B cell (primary cell): ENCODE measurements at regions of chr1 and their contacts with region 1.

Region 1: DNA sequence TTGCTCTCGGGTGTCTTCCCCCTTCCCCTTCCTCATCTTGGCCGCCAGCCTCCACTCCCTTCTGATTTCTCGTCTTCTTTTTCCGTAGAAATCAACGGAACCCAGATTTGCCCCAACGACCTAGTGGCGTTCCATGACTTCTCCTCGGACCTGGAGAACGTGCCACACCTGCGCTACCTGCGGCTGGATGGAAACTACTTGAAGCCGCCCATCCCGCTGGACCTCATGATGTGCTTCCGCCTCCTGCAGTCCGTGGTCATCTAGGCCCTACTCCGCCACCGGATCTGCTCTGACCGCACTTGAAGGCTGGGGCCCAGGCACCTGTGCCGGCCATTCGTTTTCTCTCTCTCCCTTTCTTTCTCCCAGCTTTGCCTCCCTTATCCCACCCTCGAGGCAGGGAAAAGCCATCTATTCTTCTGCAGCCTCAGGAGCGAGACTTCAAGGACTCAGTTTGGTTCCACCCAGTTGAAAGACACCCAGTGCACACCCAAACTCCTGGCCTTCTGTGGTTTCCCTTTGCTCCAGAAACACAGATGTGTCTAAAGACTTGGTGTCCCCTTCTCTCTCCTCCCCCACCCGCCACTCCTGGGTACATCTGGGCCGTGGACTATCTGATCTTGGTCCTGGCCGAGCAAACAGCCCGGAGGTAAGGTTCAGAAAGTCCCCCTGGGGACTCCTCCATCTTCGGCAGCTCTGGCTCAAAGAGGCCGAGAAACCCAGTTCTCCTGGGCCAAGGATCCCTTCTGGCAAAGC is 7.2 kb upstream of the OPTC start:
- DNase-seq: no peak
- ATAC-seq: no peak
- H3K4me3 ChIP-seq: no peak overlapping the region
- H3K4me3 Mint-ChIP-seq: peak overlapping the region; percentile 90
- H3K27ac ChIP-seq: no peak overlapping the region
- H3K27ac Mint-ChIP-seq: peak overlapping the region; percentile 53
- H3K4me1 ChIP-seq: peaks cover 0 to 10% of the 10 kb centered on the region in 2 donors
- H3K4me1 Mint-ChIP-seq: peaks cover 9% of the 10 kb centered on the region
- H3K27me3 ChIP-seq: peaks cover 0 to 2% (median 0%) of the 10 kb centered on the region in 4 experiments
- H3K27me3 Mint-ChIP-seq: peaks cover 8% of the 10 kb centered on the region
- CTCF ChIP-seq: no peak

Region 2: GRCh38 chr1:203038891-203039608 is 447.7 kb before region 1 on chr1:
- CTCF ChIA-PET with region 1: interaction called, 12 read pairs
- POLR2A ChIA-PET with region 1: no interaction called
- intact Hi-C with region 1: no loop called
- DNase-seq: peak; percentile 73
- ATAC-seq: peak; percentile 78
- H3K4me3 ChIP-seq: no peak overlapping the region
- H3K4me3 Mint-ChIP-seq: no peak overlapping the region
- H3K27ac ChIP-seq: no peak overlapping the region
- H3K27ac Mint-ChIP-seq: no peak overlapping the region
- H3K4me1 ChIP-seq: peaks cover 0 to 2% of the 10 kb centered on the region in 2 donors
- H3K4me1 Mint-ChIP-seq: peaks cover 1% of the 10 kb centered on the region
- H3K27me3 ChIP-seq: peaks cover 0 to 10% (median 2%) of the 10 kb centered on the region in 4 experiments
- H3K27me3 Mint-ChIP-seq: peaks cover 12% of the 10 kb centered on the region
- CTCF ChIP-seq: peak; percentile 93

Region 3: DNA sequence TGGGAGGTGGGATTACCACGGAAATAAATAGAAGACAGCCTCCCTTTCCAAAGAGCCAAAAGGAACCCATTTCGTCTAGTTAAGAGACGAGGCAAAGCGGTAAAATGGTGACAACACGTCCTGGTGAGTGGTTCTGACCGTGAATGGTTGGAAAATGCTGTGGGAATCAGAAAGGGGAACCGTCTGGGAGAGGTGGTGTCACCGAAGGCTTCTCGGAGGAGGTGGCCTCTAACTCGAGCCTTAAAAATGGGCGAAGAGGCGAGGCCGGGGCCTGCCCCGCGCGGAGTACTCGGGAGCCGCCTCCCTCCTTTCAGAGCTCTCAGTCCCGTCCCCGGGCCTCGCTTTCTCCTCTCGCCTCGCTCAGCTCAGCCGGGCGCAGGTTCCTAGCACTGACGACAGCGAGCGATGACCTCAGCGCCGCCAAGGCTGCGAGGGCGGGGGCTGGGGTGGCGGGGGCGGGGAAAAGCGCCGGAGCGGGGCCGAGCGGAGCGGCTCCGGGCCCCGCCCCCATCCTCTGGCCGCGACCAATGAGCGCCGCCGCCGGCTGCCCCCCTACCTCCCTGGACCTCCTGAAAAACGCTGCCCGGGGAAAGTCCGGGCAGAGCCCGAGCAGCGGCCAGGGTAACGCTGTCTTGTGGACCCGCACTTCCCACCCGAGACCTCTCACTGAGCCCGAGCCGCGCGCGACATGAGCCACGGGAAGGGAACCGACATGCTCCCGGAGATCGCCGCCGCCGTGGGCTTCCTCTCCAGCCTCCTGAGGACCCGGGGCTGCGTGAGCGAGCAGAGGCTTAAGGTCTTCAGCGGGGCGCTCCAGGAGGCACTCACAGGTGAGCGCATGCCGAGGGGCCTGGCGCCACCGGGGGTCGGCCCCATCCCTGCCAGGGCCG is 181.6 kb before region 1 on chr1 and contains the start of gene BTG2:
- CTCF ChIA-PET with region 1: interaction called, 29 read pairs
- POLR2A ChIA-PET with region 1: no interaction called
- intact Hi-C with region 1: no loop called
- DNase-seq: peak; percentile 96
- ATAC-seq: peak; percentile 80
- H3K4me3 ChIP-seq: peak within 1 kb of the TSS; percentile 96 to 99 (median 99)
- H3K4me3 Mint-ChIP-seq: peak within 1 kb of the TSS; percentile 99
- H3K27ac ChIP-seq: peak within 1 kb of the TSS; percentile 100
- H3K27ac Mint-ChIP-seq: peak within 1 kb of the TSS; percentile 99
- H3K4me1 ChIP-seq: peaks cover 65 to 78% of the 10 kb centered on the region in 2 donors
- H3K4me1 Mint-ChIP-seq: peaks cover 70% of the 10 kb centered on the region
- H3K27me3 ChIP-seq: no peaks in the 10 kb centered on the region
- H3K27me3 Mint-ChIP-seq: no peaks in the 10 kb centered on the region
- CTCF ChIP-seq: no peak
- total RNA-seq, gene BTG2: 505 and 508 TPM in 2 replicates

Region 4: DNA sequence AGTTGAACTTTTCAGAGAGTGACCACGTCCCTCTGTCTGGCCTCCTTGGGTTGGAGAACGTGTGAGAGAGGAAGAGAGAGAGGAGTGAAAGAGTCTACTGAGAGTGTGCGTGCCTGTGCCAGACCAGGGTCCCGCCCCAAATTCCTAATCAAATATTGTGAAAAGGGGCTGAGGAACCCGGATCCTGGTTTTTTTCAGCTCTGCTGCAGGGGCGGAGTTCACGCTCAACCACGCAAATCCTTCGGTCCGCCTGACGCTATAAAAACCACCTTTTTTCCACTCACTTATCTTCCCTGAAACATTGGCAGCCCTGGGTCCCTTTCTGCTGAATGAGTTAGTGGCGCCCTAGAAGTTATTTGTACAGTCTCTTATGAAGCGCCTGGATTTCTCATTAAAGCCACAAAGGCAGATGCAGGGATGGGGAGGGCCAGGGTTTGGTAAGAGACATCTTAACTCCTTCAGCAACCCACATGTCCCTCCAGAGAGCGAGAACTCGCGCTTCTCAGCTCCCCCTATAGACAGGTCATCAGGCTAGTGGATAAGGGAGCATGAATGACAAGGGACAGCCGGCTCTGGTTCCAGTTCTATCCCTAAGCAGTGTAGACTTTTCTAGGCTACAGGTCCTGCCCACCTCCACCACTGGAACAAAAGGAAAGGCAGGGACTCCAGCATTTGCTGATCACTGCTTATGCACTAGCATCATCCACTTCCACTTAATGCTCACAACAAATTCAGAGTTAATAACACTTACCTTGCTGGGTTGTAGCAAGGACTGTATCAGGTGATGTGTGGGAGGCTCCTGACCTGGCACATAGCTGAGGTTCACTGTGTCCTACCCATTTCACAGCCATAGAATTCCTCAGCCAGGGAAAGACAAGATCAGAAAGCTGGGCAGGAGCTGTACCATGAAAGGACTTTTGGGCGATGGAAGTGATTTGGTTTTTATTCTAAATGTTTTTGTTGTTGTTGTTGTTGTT is 135.5 kb before region 1 on chr1 and contains the start of gene FMOD:
- CTCF ChIA-PET with region 1: interaction called, 511 read pairs
- POLR2A ChIA-PET with region 1: no interaction called
- intact Hi-C with region 1: no loop called
- DNase-seq: peak; percentile 32
- ATAC-seq: no peak
- H3K4me3 ChIP-seq: no peak within 1 kb of the TSS
- H3K4me3 Mint-ChIP-seq: no peak within 1 kb of the TSS
- H3K27ac ChIP-seq: no peak within 1 kb of the TSS
- H3K27ac Mint-ChIP-seq: no peak within 1 kb of the TSS
- H3K4me1 ChIP-seq: peaks cover 6 to 10% of the 10 kb centered on the region in 2 donors
- H3K4me1 Mint-ChIP-seq: peaks cover 3% of the 10 kb centered on the region
- H3K27me3 ChIP-seq: peaks cover 0 to 32% (median 5%) of the 10 kb centered on the region in 4 experiments
- H3K27me3 Mint-ChIP-seq: peaks cover 38% of the 10 kb centered on the region
- CTCF ChIP-seq: no peak
- total RNA-seq, gene FMOD: not detected in 2 replicates

Region 5: DNA sequence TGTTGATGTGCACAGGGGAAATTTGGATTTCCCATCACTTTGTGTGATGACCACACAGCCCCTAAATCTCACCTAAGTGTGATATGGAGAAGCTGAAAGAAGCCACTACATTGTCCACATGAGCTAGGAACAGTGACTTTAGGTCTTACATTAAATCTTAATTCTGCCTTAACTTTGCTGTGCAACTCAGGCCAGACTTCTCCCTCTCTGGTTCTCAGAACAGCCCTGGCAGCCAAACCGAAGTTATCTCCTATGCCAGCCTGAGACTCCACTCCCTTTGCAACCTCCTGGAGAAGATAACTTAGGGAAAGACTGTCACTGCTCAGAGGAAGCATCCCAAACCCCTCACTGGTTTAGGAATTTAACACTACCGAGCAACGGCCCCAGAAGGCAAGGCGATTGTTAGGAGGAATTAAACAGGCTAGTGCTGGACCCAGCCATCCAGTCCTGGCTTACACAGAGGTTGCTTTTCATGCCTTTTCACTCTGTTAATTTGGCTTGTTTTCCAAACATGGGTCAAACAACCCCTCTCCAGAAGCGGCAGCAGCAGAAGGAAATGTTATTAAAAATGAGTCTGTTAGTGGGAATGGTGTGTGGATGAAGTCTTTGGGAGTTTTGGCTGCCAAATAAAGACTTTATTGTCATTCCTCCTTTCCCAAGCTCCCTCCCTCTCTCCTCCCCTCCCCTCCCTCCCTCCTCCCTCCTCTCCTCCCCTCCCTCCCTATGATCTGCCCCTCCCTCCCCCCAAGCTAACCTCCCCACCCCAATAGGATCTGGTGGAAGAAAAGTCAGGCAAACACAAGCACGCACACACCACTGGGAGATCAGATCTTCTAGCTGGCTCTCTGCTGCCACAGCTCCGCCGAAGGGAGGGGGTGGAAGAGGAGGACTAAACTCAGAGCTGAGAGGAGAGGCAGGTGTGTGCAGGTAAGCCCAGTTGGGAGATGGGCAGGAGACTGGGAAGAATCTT is 11.5 kb before region 1 on chr1 and contains the start of gene PRELP:
- CTCF ChIA-PET with region 1: interaction called, 53 read pairs
- POLR2A ChIA-PET with region 1: no interaction called
- intact Hi-C with region 1: no loop called
- DNase-seq: no peak
- ATAC-seq: no peak
- H3K4me3 ChIP-seq: no peak within 1 kb of the TSS
- H3K4me3 Mint-ChIP-seq: no peak within 1 kb of the TSS
- H3K27ac ChIP-seq: no peak within 1 kb of the TSS
- H3K27ac Mint-ChIP-seq: no peak within 1 kb of the TSS
- H3K4me1 ChIP-seq: peaks cover 0 to under 1% of the 10 kb centered on the region in 2 donors
- H3K4me1 Mint-ChIP-seq: peaks cover 9% of the 10 kb centered on the region
- H3K27me3 ChIP-seq: no peaks in the 10 kb centered on the region
- H3K27me3 Mint-ChIP-seq: peaks cover 33% of the 10 kb centered on the region
- CTCF ChIP-seq: no peak
- total RNA-seq, gene PRELP: not detected in 2 replicates

Region 6: DNA sequence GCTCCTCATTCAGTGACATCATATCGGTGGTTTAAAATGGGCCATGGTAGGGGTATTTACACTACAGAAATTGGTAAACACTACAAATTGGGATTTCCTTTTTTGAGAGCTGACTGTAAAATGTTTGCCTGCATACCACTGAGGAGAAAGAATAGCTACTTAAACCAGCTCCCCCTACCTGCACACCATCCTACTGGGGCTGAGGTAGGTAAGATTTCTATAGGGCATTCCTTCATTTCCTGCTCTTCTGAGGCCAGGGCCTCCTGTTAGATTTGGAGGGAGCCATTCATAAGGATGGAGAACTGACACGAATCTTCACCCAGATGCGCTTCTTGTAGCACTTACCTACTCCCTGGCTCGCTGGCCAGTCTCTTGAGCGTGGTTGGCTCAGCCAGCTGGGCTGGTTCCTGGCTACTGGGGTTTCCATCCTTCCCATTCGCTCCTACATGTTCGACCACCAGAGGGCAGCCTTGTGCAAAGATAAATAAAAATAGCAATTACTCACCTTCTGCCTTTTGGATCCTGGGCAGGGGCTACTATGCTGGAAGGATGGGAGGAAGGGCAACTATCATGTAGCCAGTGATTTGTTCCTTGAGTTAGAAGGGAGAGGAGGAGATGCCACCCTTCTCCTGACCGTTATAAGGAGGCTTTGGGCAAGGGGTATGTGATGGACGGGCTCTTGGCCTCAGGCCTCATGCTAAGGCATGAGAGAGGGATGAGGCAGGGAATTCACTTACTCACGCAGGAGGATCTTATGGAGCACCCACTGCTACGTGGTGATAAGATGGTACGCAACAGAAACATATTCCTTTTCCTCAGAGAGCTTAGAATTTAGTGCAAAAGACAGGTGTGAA is 17.8 kb after region 1 on chr1:
- CTCF ChIA-PET with region 1: interaction called, 20 read pairs
- POLR2A ChIA-PET with region 1: no interaction called
- intact Hi-C with region 1: no loop called
- DNase-seq: peak; percentile 80
- ATAC-seq: peak; percentile 72
- H3K4me3 ChIP-seq: no peak overlapping the region
- H3K4me3 Mint-ChIP-seq: no peak overlapping the region
- H3K27ac ChIP-seq: no peak overlapping the region
- H3K27ac Mint-ChIP-seq: no peak overlapping the region
- H3K4me1 ChIP-seq: no peaks in the 10 kb centered on the region
- H3K4me1 Mint-ChIP-seq: peaks cover 2% of the 10 kb centered on the region
- H3K27me3 ChIP-seq: peaks cover 0 to 7% (median 0%) of the 10 kb centered on the region in 4 experiments
- H3K27me3 Mint-ChIP-seq: peaks cover 16% of the 10 kb centered on the region
- CTCF ChIP-seq: peak; percentile 93

Region 7: GRCh38 chr1:203720262-203720661 is 233.5 kb after region 1 on chr1:
- CTCF ChIA-PET with region 1: no interaction called
- POLR2A ChIA-PET with region 1: no interaction called
- intact Hi-C with region 1: no loop called
- DNase-seq: no peak
- ATAC-seq: no peak
- H3K4me3 ChIP-seq: no peak overlapping the region
- H3K4me3 Mint-ChIP-seq: no peak overlapping the region
- H3K27ac ChIP-seq: no peak overlapping the region
- H3K27ac Mint-ChIP-seq: no peak overlapping the region
- H3K4me1 ChIP-seq: no peaks in the 10 kb centered on the region
- H3K4me1 Mint-ChIP-seq: no peaks in the 10 kb centered on the region
- H3K27me3 ChIP-seq: no peaks in the 10 kb centered on the region
- H3K27me3 Mint-ChIP-seq: no peaks in the 10 kb centered on the region
- CTCF ChIP-seq: no peak